ENCODE measurements at regions of chr3 and their contacts with region 1.

Region 1: DNA sequence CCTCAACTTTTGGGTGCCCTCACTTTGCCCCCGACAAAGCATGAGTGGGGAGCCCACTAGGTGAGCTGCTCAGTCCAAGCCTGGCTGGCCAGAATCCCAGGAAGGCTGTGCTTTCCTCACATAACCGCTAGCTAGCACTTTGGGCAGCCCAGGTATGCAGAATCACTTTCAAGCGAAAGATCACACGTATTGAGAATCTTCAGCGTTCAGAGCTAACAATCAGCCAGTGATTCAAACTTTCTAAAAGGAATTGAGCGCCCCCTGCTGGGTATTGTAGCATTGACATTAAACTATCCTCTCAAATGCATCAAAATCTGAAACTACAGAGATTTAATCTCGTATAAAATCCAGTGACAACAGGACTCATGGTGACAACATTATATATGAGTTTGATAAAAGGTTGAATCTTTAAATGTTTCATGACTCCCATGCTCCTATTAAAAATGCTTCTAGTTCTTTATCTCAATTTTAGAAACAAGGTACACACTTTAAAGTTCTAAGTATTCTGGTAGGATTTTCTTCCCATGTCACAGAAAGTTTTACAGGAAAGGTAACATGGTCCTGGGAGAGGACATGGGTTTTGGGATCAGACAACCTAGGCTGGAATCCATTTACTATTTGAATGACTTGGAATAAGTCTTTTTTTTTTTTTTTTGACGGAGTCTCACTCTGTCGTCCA is 11.8 kb downstream of the ANAPC13 start:
- DNase-seq: peak; percentile 73
- H3K4me3 ChIP-seq: no peak overlapping the region
- H3K27ac ChIP-seq: no peak overlapping the region
- H3K4me1 ChIP-seq: peaks cover 13% of the 10 kb centered on the region
- H3K27me3 ChIP-seq: no peaks in the 10 kb centered on the region
- CTCF ChIP-seq: peak; percentile 61 to 63
- POLR2A ChIP-seq: no peak

Region 2: DNA sequence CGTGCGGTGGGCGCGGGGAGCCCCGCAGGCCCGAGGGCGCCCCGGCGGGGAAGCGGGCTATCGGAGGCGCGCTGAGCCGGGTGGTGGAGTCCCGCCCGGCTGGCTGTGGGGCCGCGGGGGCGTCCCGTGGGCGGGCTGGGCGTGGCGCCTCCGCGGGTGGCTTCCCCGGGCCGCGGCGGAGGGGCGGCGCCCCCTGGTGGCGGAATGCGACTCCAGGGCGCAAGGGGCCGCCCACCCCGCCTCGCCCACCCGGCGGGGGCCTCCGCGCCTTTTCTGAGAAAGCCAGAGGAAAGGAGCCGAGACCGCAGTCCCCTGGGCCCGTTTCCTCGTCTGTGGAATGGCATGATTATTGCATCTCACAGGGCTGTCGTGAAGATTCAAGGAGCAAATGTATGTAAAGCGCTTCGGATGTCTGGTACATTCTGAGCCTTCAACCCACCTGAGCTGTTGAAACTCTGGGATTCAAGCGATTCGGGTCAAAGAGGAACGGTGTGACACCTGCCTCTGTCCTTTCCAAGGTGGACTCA is 546.4 kb before region 1 on chr3:
- CTCF ChIA-PET with region 1: interaction called, 3 read pairs
- POLR2A ChIA-PET with region 1: no interaction called
- dilution Hi-C with region 1: no loop called
- intact Hi-C with region 1: loop called (anchors 5 kb)
- DNase-seq: peak; percentile 37
- H3K4me3 ChIP-seq: peak overlapping the region; percentile 32 to 53 (median 39)
- H3K27ac ChIP-seq: no peak overlapping the region
- H3K4me1 ChIP-seq: peaks cover 7% of the 10 kb centered on the region
- H3K27me3 ChIP-seq: no peaks in the 10 kb centered on the region
- CTCF ChIP-seq: peak; percentile 70 to 87
- POLR2A ChIP-seq: no peak

Region 3: GRCh38 chr3:134308350-134308891 is 165.6 kb before region 1 on chr3:
- CTCF ChIA-PET with region 1: interaction called, 296 read pairs
- POLR2A ChIA-PET with region 1: interaction called, 3 read pairs
- dilution Hi-C with region 1: no loop called
- intact Hi-C with region 1: loop called (anchors 1 kb)
- DNase-seq: peak; percentile 84
- H3K4me3 ChIP-seq: no peak overlapping the region
- H3K27ac ChIP-seq: no peak overlapping the region
- H3K4me1 ChIP-seq: peaks cover 3% of the 10 kb centered on the region
- H3K27me3 ChIP-seq: peaks cover 0 to 6% of the 10 kb centered on the region in 2 experiments
- CTCF ChIP-seq: peak; percentile 95 to 97
- POLR2A ChIP-seq: no peak

Region 4: DNA sequence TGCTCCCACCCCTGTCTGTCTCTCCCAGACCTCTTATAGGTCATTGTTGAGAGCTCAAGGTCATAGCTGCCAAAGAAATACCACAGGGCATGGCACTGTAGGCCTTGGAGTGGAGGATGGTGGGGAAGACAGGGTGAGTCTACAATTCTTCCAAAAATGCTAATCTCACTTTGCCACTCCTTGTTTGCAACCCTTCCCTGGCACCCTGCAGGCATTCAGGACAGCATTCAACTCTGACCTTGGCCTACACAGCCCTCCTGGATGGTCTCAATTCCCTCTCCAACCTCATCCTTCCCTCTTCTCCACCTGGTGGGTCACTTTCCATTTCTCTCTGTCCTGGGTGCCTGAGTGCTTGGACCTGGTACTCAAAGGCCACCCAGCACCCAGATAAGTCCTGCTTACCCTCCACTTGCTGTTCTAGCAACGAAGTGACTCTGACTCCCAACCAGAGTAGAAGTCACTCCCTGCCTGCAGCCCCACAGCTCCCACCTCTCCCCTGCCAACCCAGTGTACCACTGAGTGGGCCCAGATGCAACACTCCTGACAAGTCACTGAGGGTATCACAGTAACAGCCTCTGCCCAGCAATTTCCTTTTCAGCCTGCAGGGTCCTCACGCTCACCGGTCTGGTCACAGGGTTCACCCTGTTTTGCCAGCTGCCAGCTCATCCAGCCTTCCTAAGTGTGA is 136.4 kb before region 1 on chr3:
- CTCF ChIA-PET with region 1: no interaction called
- POLR2A ChIA-PET with region 1: no interaction called
- dilution Hi-C with region 1: no loop called
- intact Hi-C with region 1: no loop called
- DNase-seq: no peak
- H3K4me3 ChIP-seq: no peak overlapping the region
- H3K27ac ChIP-seq: no peak overlapping the region
- H3K4me1 ChIP-seq: peaks cover 6% of the 10 kb centered on the region
- H3K27me3 ChIP-seq: no peaks in the 10 kb centered on the region
- CTCF ChIP-seq: no peak
- POLR2A ChIP-seq: no peak

Region 5: GRCh38 chr3:134364061-134364935 is 109.7 kb before region 1 on chr3:
- CTCF ChIA-PET with region 1: interaction called, 38 read pairs
- POLR2A ChIA-PET with region 1: interaction called, 3 read pairs
- dilution Hi-C with region 1: no loop called
- intact Hi-C with region 1: loop called (anchors 2 kb)
- DNase-seq: peak; percentile 94
- H3K4me3 ChIP-seq: no peak overlapping the region
- H3K27ac ChIP-seq: peak overlapping the region; percentile 83
- H3K4me1 ChIP-seq: peaks cover 64% of the 10 kb centered on the region
- H3K27me3 ChIP-seq: no peaks in the 10 kb centered on the region
- CTCF ChIP-seq: no peak
- POLR2A ChIP-seq: peak; percentile 76

Region 6: GRCh38 chr3:134381827-134382442 is 92.1 kb before region 1 on chr3:
- CTCF ChIA-PET with region 1: interaction called, 43 read pairs
- POLR2A ChIA-PET with region 1: no interaction called
- dilution Hi-C with region 1: no loop called
- intact Hi-C with region 1: loop called (anchors 1 kb)
- DNase-seq: no peak
- H3K4me3 ChIP-seq: no peak overlapping the region
- H3K27ac ChIP-seq: no peak overlapping the region
- H3K4me1 ChIP-seq: peaks cover 6% of the 10 kb centered on the region
- H3K27me3 ChIP-seq: peaks cover 8% of the 10 kb centered on the region in 2 experiments
- CTCF ChIP-seq: no peak
- POLR2A ChIP-seq: no peak

Region 7: DNA sequence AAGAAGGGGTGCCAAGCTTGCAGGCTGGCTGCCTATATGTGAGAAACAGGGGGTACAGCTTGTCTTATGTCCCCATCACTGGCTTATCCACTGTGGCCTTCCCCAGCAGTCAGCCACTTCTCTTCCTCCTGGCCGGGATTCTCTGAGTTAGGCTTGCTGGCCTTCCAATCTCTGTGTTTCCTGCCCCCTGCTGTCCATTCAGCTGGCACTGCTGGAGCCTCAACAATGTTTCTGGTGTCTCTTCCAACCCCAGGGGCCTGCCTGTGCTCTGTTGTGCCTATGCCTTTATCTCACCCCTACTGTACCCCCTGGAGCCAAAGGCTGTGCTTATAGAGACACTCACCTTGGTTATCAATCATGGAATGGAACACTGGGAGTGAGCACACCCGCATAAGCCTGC is 24.7 kb before region 1 on chr3:
- CTCF ChIA-PET with region 1: interaction called, 15 read pairs
- POLR2A ChIA-PET with region 1: no interaction called
- dilution Hi-C with region 1: no loop called
- intact Hi-C with region 1: no loop called
- DNase-seq: peak; percentile 11
- H3K4me3 ChIP-seq: no peak overlapping the region
- H3K27ac ChIP-seq: no peak overlapping the region
- H3K4me1 ChIP-seq: peaks cover 23% of the 10 kb centered on the region
- H3K27me3 ChIP-seq: peaks cover 0 to 6% of the 10 kb centered on the region in 2 experiments
- CTCF ChIP-seq: peak; percentile 32 to 45
- POLR2A ChIP-seq: no peak

Region 8: GRCh38 chr3:134663721-134664456 is 189.9 kb after region 1 on chr3:
- CTCF ChIA-PET with region 1: no interaction called
- POLR2A ChIA-PET with region 1: no interaction called
- dilution Hi-C with region 1: no loop called
- intact Hi-C with region 1: no loop called
- DNase-seq: no peak
- H3K4me3 ChIP-seq: no peak overlapping the region
- H3K27ac ChIP-seq: no peak overlapping the region
- H3K4me1 ChIP-seq: no peaks in the 10 kb centered on the region
- H3K27me3 ChIP-seq: no peaks in the 10 kb centered on the region
- CTCF ChIP-seq: no peak
- POLR2A ChIP-seq: no peak